ENCODE measurements at regions of chr6 and their contacts with region 1.

Region 1: GRCh38 chr6:30453508-30454116 is 35.7 kb upstream of the HLA-E start:
- DNase-seq: peak; percentile 93
- H3K4me3 ChIP-seq: no peak overlapping the region
- H3K27ac ChIP-seq: no peak overlapping the region
- H3K4me1 ChIP-seq: no peaks in the 10 kb centered on the region
- H3K27me3 ChIP-seq: peaks cover 76 to 87% of the 10 kb centered on the region in 2 experiments
- CTCF ChIP-seq: peak; percentile 96
- POLR2A ChIP-seq: no peak

Region 2: GRCh38 chr6:30396833-30397479 is 56.7 kb before region 1 on chr6:
- CTCF ChIA-PET with region 1: interaction called, 11 read pairs
- POLR2A ChIA-PET with region 1: no interaction called
- dilution Hi-C with region 1: no loop called
- intact Hi-C with region 1: no loop called
- DNase-seq: peak; percentile 72
- H3K4me3 ChIP-seq: no peak overlapping the region
- H3K27ac ChIP-seq: no peak overlapping the region
- H3K4me1 ChIP-seq: no peaks in the 10 kb centered on the region
- H3K27me3 ChIP-seq: peaks cover 21 to 25% of the 10 kb centered on the region in 2 experiments
- CTCF ChIP-seq: peak; percentile 92 to 98
- POLR2A ChIP-seq: no peak

Region 3: DNA sequence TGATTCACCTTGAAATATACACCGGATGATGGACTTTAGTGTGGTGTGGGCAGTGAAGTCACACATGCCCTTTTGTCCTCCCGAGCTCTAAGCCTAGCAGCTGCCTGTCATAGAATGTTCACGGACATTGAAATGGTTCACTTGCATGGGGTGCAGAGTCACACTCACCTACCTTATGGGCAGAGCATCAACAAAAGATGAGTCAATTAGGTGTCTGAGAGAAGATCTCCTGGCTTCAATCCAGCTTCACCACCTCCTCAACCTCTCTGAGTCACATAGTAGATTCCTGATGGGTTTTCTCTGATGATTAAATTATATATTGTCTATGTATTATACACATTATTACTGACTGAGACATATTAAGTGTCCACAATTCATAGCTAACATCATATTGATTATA is 12.4 kb before region 1 on chr6:
- CTCF ChIA-PET with region 1: interaction called, 14 read pairs
- POLR2A ChIA-PET with region 1: no interaction called
- dilution Hi-C with region 1: no loop called
- intact Hi-C with region 1: no loop called
- DNase-seq: no peak
- H3K4me3 ChIP-seq: no peak overlapping the region
- H3K27ac ChIP-seq: no peak overlapping the region
- H3K4me1 ChIP-seq: no peaks in the 10 kb centered on the region
- H3K27me3 ChIP-seq: peaks cover 49 to 74% of the 10 kb centered on the region in 2 experiments
- CTCF ChIP-seq: no peak
- POLR2A ChIP-seq: no peak

Region 4: DNA sequence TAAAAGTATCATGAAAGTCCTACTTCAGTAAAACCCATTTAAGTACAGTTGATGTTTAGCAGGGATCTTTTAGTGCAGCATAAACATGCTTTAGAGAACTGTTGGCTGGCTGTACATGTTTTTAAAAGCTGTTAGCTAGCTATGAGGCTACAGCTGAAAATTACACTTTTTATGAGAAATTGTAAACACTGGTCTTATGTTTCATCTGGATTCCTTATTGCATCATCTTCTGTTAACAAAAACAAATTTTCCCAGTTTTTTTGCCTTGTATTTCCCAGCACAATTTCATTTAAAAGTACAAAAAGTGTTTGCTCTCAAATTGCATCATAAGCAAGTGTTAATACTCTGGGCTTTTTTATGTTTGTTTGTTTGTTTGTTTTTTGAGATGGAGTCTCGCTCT is 17.4 kb after region 1 on chr6:
- CTCF ChIA-PET with region 1: interaction called, 51 read pairs
- POLR2A ChIA-PET with region 1: no interaction called
- dilution Hi-C with region 1: no loop called
- intact Hi-C with region 1: no loop called
- DNase-seq: no peak
- H3K4me3 ChIP-seq: no peak overlapping the region
- H3K27ac ChIP-seq: no peak overlapping the region
- H3K4me1 ChIP-seq: no peaks in the 10 kb centered on the region
- H3K27me3 ChIP-seq: peaks cover 46 to 55% of the 10 kb centered on the region in 2 experiments
- CTCF ChIP-seq: no peak
- POLR2A ChIP-seq: no peak

Measured in endothelial cell of umbilical vein (primary cell).